ENCODE measurements at regions of chr6 and their contacts with region 1.

Region 1: GRCh38 chr6:2866181-2866846 is 24.7 kb upstream of the SERPINB1 start:
- DNase-seq: no peak
- ATAC-seq: peak; percentile 43
- H3K4me3 ChIP-seq: 0 out of 4 replicates have a peak overlapping the region, but pooled peaks of 1 of the 2 experiments have one; percentile 4
- H3K27ac ChIP-seq: no peak overlapping the region
- H3K4me1 ChIP-seq: peaks cover 13 to 34% of the 10 kb centered on the region in 2 experiments
- H3K27me3 ChIP-seq: no peaks in the 10 kb centered on the region
- CTCF ChIP-seq: no peak
- POLR2A ChIP-seq: no peak
- RAD21 ChIP-seq: no peak

Region 2: GRCh38 chr6:2432239-2432638 is 434.1 kb before region 1 on chr6:
- CTCF ChIA-PET with region 1: no interaction called
- POLR2A ChIA-PET with region 1: no interaction called
- RAD21 ChIA-PET with region 1: no interaction called
- intact Hi-C with region 1: no loop called
- DNase-seq: peak; percentile 26
- ATAC-seq: peak; percentile 57
- H3K4me3 ChIP-seq: no peak overlapping the region; a peak in 1 of 4 replicates
- H3K27ac ChIP-seq: no peak overlapping the region
- H3K4me1 ChIP-seq: peaks cover 12 to 50% of the 10 kb centered on the region in 2 experiments
- H3K27me3 ChIP-seq: no peaks in the 10 kb centered on the region
- CTCF ChIP-seq: no peak
- POLR2A ChIP-seq: no peak
- RAD21 ChIP-seq: no peak

Region 3: DNA sequence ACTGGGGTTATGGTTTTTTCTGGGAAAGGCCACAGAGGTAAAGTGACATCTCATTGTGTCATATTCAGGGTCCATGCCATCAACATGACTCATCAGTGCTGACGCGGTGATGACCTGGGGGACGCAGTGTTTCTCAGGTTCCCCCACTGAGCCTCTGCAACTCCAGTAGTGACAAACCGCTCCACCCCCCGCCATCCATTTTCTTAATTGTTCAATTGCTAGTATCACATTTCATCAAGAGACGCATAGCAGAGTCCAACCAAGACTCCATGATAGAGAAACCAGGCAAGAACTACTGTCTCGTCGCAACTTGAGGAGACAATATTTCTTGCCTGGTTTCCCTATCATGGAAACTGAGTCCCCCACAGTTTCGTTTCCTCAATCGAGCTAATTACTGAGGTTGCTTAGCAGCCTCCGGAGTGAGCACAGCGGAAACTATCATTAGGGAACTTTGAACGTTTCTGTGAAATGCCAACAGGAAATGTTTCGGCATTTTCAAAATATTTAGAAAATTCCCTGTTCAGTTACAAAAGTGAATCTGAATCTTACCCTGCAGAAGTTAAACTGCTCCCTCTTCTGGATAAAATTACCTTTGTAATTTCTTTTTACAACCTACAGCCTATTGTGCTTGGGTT is 12.4 kb before region 1 on chr6:
- CTCF ChIA-PET with region 1: interaction called, 4 read pairs
- POLR2A ChIA-PET with region 1: interaction called, 18 read pairs
- RAD21 ChIA-PET with region 1: no interaction called
- intact Hi-C with region 1: no loop called
- DNase-seq: peak; percentile 87
- ATAC-seq: peak; percentile 47
- H3K4me3 ChIP-seq: peak overlapping the region; percentile 23 to 53
- H3K27ac ChIP-seq: peak overlapping the region; percentile 76
- H3K4me1 ChIP-seq: peaks cover 44 to 88% of the 10 kb centered on the region in 2 experiments
- H3K27me3 ChIP-seq: no peaks in the 10 kb centered on the region
- CTCF ChIP-seq: peak in 2 of 3 experiments; percentile 26 to 40; a peak in 2 of 6 replicates
- POLR2A ChIP-seq: no peak
- RAD21 ChIP-seq: no peak

Region 4: DNA sequence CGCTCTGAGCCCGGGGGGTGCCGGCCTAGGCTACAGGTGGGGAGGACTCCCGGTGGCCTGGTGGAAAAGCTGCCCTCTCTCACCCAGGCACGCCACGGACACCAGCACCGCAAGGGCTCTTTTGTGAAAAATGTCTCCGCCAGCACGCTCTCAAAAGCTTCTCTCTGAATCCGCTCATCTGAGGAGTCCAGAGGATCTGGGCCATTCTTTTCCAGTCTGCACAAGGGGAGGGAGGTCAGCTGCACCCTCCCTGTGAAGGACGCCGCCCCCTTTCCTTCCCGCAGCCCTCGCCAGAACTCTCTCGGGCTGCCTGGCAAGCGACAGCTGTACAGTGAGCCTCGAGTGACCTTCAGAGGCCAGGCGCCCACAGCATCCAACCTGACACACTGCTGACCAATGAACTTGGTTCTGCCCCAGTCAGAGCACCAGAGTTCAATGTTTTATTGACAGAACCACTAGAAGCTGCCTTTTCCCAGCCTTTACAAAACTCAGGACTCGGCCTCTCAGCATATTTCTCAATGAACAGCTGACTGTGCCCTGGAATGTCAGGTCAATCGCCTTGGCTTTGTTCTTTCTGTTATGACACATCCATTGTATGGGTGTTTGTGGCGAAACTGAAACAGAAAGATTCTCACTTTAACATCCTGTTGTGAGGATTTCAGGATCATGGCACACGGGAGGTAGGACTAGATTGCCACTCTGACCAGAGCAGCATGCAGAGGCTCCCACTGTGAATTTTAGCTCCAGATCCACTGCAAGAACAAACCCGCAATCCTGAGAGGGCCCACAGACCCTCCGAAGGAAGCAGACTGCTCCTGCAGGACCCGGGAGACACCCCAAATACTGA is 10.1 kb after region 1 on chr6:
- CTCF ChIA-PET with region 1: interaction called, 4 read pairs
- POLR2A ChIA-PET with region 1: interaction called, 20 read pairs
- RAD21 ChIA-PET with region 1: no interaction called
- intact Hi-C with region 1: no loop called
- DNase-seq: peak; percentile 58
- ATAC-seq: peak; percentile 66
- H3K4me3 ChIP-seq: peak overlapping the region; percentile 43 to 47
- H3K27ac ChIP-seq: peak overlapping the region; percentile 76
- H3K4me1 ChIP-seq: peaks cover 29 to 39% of the 10 kb centered on the region in 2 experiments
- H3K27me3 ChIP-seq: no peaks in the 10 kb centered on the region
- CTCF ChIP-seq: no peak
- POLR2A ChIP-seq: no peak
- RAD21 ChIP-seq: no peak

Region 5: DNA sequence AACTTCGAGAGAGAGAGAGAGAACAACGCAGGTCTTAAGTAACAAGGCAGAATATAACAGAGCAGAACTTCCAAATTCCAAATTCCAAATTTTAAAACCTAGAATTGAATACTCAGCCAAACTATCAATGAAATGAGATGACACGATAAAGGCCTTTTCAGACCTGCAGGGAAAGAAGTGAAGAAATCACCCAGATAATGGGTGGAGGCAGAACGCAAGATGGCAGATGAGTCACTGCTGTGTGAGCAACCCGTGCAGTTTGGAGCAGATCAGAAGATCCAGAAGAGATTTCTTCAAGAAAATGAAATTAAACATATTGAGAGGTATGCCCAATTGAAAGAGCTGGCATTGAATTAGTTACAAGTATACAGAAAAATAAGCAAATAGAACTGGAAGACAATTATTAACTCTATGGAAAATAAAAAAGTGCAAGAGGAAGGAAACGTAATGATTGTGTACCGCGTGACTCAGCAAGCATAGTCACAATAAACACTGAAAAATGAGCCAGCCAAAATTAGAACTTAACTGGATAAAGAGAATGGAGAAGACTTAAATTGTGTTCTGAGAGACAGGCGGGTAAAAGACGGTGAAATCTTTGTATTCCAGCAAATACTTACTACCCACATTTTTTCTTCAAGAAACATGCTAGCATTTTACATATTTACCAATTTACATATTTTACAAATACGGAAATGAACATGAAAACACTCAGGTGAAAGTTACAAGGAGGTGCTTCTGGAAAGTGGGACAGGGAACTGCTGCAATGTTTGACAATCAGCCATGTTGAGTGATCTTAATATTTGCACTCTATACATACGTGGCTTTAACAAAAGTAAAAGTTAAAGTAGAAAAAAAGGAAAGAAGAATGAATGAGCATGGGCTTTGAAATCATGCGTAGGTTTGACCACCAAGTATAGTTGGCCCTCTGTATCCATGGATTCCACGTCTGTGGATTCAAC is 1822.0 kb after region 1 on chr6:
- CTCF ChIA-PET with region 1: no interaction called
- POLR2A ChIA-PET with region 1: no interaction called
- RAD21 ChIA-PET with region 1: no interaction called
- intact Hi-C with region 1: no loop called
- DNase-seq: peak; percentile 53
- ATAC-seq: peak; percentile 86
- H3K4me3 ChIP-seq: peak overlapping the region; percentile 7 to 46; a peak in 3 of 4 replicates
- H3K27ac ChIP-seq: peak overlapping the region; percentile 62
- H3K4me1 ChIP-seq: peaks cover 9 to 20% of the 10 kb centered on the region in 2 experiments; a peak in 3 of 4 replicates
- H3K27me3 ChIP-seq: no peaks in the 10 kb centered on the region
- CTCF ChIP-seq: no peak
- POLR2A ChIP-seq: no peak
- RAD21 ChIP-seq: peak; percentile 39; the same call in 1 of the 2 replicates

Measured in HCT116 (cell line).